Activated CD8-positive, alpha-beta memory T cell treated with anti-CD3 and anti-CD28 coated beads, Interleukin-2, amount 10 ng/mL, durations not matched to agents 7 days and 5 days (primary cell): ENCODE measurements at regions of chr6 and their contacts with region 1.

Region 1: GRCh38 chr6:14144678-14145113 is 27.1 kb downstream of the CD83 start:
- DNase-seq: peak; percentile 76
- ATAC-seq: peak; percentile 90
- H3K4me3 Mint-ChIP-seq: no peak overlapping the region
- H3K27ac Mint-ChIP-seq: no peak overlapping the region
- H3K4me1 Mint-ChIP-seq: peaks cover 9% of the 10 kb centered on the region
- H3K27me3 Mint-ChIP-seq: no peaks in the 10 kb centered on the region

Region 2: DNA sequence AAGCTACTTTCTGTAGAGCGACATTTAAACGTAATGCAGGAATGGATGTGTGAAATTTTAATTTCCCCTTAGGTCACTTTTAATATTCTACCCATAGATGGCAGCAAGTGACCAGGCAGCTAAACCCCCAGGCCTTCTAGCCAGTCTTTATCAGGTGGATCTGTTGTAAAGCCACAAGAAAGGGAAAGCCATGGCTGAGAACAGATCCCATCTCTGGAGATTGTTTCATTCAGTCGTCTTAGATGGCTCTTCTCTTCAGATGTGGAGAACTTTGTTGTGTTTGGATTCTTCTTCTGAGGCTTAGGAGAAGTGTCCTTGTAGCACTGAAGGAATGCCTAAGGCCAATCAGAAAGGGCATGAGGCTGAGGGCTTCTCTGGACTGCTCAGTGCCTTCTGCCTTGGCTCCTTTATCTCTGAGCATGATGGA is 235.7 kb before region 1 on chr6:
- CTCF ChIA-PET with region 1: interaction called, 31 read pairs
- DNase-seq: peak; percentile 52
- ATAC-seq: peak; percentile 60
- H3K4me3 Mint-ChIP-seq: no peak overlapping the region
- H3K27ac Mint-ChIP-seq: no peak overlapping the region
- H3K4me1 Mint-ChIP-seq: no peaks in the 10 kb centered on the region
- H3K27me3 Mint-ChIP-seq: peaks cover 46% of the 10 kb centered on the region

Region 3: GRCh38 chr6:14126191-14126590 is 18.5 kb before region 1 on chr6:
- CTCF ChIA-PET with region 1: interaction called, 11 read pairs
- DNase-seq: no peak
- ATAC-seq: no peak
- H3K4me3 Mint-ChIP-seq: no peak overlapping the region
- H3K27ac Mint-ChIP-seq: no peak overlapping the region
- H3K4me1 Mint-ChIP-seq: peaks cover 18% of the 10 kb centered on the region
- H3K27me3 Mint-ChIP-seq: no peaks in the 10 kb centered on the region